ENCODE measurements at regions of chr10 and their contacts with region 1.

Region 1: GRCh38 chr10:4813023-4813422 is 13.0 kb upstream of the AKR1E2 start:
- DNase-seq: peak in 2 of 14 experiments; percentile 27 to 52
- ATAC-seq: no peak
- H3K4me3 ChIP-seq: no peak overlapping the region
- H3K4me3 Mint-ChIP-seq: no peak overlapping the region
- H3K27ac ChIP-seq: no peak overlapping the region
- H3K27ac Mint-ChIP-seq: no peak overlapping the region
- H3K4me1 ChIP-seq: peaks cover 3% of the 10 kb centered on the region
- H3K4me1 Mint-ChIP-seq: no peaks in the 10 kb centered on the region
- H3K27me3 ChIP-seq: peaks cover 0 to 4% of the 10 kb centered on the region in 2 experiments
- H3K27me3 Mint-ChIP-seq: peaks cover 11% of the 10 kb centered on the region
- CTCF ChIP-seq: no peak

Region 2: DNA sequence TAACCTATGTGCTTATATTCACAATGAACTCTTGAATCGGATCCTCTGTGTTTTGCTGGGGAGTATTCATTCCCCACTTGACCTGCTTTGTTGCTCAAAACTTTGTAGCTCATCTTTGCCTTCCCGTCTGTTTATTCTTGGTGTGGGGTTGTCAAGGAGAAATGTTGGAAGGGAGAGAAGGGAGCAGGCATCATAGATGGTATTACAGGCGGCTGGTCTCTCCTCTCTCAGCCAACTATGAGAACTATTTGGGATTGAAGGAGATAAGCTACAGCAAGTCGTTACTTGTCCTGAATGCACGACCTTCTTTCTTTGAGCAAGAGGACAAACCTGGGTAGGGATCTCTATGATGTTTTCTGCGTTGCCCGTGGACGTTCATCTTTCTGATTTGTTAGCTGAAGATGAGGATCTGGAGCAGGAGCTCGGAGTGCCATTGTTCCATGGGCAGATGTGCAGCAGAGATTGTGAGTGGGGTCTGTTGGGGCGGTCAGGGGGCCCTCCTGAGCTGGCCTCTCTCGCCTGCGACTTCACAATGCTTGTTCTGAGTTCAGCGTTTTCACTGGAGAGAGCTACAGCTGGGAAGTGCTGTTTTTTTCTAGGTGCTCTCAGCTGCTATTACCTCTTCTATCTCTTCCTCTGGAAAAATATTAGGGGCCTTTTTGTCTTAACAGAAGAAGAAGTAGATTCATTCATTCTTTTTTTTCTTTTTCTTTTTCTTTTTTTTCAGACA is 901.1 kb before region 1 on chr10:
- CTCF ChIA-PET with region 1: no interaction called
- POLR2A ChIA-PET with region 1: no interaction called
- intact Hi-C with region 1: no loop called
- DNase-seq: no peak
- ATAC-seq: no peak
- H3K4me3 ChIP-seq: no peak overlapping the region
- H3K4me3 Mint-ChIP-seq: no peak overlapping the region
- H3K27ac ChIP-seq: no peak overlapping the region
- H3K27ac Mint-ChIP-seq: no peak overlapping the region
- H3K4me1 ChIP-seq: no peaks in the 10 kb centered on the region
- H3K4me1 Mint-ChIP-seq: no peaks in the 10 kb centered on the region
- H3K27me3 ChIP-seq: no peaks in the 10 kb centered on the region
- H3K27me3 Mint-ChIP-seq: no peaks in the 10 kb centered on the region
- CTCF ChIP-seq: no peak

Region 3: GRCh38 chr10:4748491-4749308 is 64.3 kb before region 1 on chr10:
- CTCF ChIA-PET with region 1: no interaction called
- POLR2A ChIA-PET with region 1: no interaction called
- intact Hi-C with region 1: no loop called
- DNase-seq: no peak
- ATAC-seq: no peak
- H3K4me3 ChIP-seq: no peak overlapping the region
- H3K4me3 Mint-ChIP-seq: no peak overlapping the region
- H3K27ac ChIP-seq: no peak overlapping the region
- H3K27ac Mint-ChIP-seq: no peak overlapping the region
- H3K4me1 ChIP-seq: no peaks in the 10 kb centered on the region
- H3K4me1 Mint-ChIP-seq: no peaks in the 10 kb centered on the region
- H3K27me3 ChIP-seq: peaks cover 18 to 40% of the 10 kb centered on the region in 2 experiments
- H3K27me3 Mint-ChIP-seq: peaks cover 53% of the 10 kb centered on the region
- CTCF ChIP-seq: no peak

Region 4: GRCh38 chr10:4825851-4826665 is 13.0 kb after region 1 on chr10 and contains the start of gene AKR1E2:
- CTCF ChIA-PET with region 1: interaction called, 21 read pairs
- POLR2A ChIA-PET with region 1: interaction called, 6 read pairs
- intact Hi-C with region 1: no loop called
- DNase-seq: peak; percentile 45 to 94 (median 78)
- ATAC-seq: peak; percentile 92
- H3K4me3 ChIP-seq: peak within 1 kb of the TSS; percentile 52
- H3K4me3 Mint-ChIP-seq: peak within 1 kb of the TSS; percentile 66
- H3K27ac ChIP-seq: peak within 1 kb of the TSS in 1 of 2 donors; percentile 52
- H3K27ac Mint-ChIP-seq: peak within 1 kb of the TSS; percentile 63
- H3K4me1 ChIP-seq: peaks cover 18% of the 10 kb centered on the region
- H3K4me1 Mint-ChIP-seq: peaks cover 43% of the 10 kb centered on the region
- H3K27me3 ChIP-seq: peaks cover 0 to 4% of the 10 kb centered on the region in 2 experiments
- H3K27me3 Mint-ChIP-seq: peaks cover 7% of the 10 kb centered on the region
- CTCF ChIP-seq: no peak
- total RNA-seq, gene AKR1E2: 26.0 to 30.4 TPM

Region 5: DNA sequence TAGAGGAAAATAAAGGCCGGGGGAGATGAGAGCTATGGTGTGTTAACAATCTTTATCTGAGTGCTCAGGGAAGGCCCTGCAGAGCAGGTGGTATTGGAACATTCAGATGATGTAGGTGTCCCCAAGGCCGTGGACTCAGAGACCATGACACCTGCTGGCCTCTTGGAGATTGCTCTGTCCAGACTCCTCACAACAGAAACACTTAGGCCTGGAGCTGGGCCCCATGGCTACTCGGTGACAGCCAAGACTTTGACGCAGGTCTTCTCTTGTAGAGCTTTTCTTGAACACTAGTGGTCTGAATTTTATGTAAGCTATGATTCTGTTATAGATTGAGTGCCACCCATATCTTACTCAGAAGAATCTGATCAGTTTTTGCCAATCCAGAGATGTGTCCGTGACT is 26.4 kb after region 1 on chr10:
- CTCF ChIA-PET with region 1: interaction called, 5 read pairs
- POLR2A ChIA-PET with region 1: interaction called, 3 read pairs
- intact Hi-C with region 1: loop called in 1 of 2 experiments (anchors 2 kb)
- DNase-seq: no peak
- ATAC-seq: no peak
- H3K4me3 ChIP-seq: no peak overlapping the region
- H3K4me3 Mint-ChIP-seq: no peak overlapping the region
- H3K27ac ChIP-seq: no peak overlapping the region
- H3K27ac Mint-ChIP-seq: peak overlapping the region; percentile 77
- H3K4me1 ChIP-seq: peaks cover 34% of the 10 kb centered on the region
- H3K4me1 Mint-ChIP-seq: peaks cover 42% of the 10 kb centered on the region
- H3K27me3 ChIP-seq: no peaks in the 10 kb centered on the region
- H3K27me3 Mint-ChIP-seq: no peaks in the 10 kb centered on the region
- CTCF ChIP-seq: no peak

Region 6: DNA sequence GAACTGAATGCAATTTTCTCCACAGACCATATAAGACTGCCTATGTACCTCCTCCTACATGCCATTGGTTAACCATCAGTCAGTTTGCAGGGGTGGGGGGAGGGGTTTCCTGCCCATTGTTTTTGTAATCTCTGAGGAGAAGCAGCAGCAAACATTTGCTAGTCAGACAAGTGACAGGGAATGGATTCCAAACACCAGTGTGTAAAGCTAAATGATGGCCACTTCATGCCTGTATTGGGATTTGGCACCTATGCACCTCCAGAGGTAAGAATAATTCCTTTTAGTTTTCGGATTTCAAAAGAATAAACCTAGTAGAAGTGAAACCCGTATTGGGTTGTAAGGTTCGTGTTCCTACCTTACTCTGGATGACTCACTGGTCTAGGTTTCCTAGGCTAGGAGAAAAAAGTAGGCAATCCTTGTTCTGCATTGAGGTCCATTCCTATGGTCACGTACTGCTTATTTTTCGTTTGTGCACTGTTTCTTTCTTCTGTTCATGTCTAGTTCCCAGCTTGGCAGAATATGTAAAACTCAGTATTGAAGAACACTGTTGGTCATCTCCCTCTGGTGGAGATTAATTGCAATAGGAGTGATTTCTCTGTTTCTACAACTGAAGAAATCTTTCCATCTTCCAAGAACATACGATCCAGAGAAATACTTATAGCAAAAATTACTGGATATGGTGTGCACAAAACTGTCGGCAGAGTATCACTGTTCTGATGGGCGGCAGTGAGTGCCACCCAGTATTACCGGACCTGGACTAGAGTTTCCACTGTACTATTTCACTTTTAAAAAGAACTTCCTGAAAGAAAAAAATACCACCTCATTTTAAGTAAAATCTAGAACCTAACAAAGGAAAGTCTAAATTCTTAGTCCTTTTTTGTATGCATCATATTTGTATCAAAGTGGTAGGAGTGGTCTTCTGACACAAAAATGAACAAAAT is 281.5 kb after region 1 on chr10 and contains the start of gene AKR1C3:
- CTCF ChIA-PET with region 1: interaction called, 4 read pairs
- POLR2A ChIA-PET with region 1: no interaction called
- intact Hi-C with region 1: loop called (anchors 1 to 2 kb)
- DNase-seq: peak in 5 of 14 experiments; percentile 2 to 69 (median 56)
- ATAC-seq: peak; percentile 83
- H3K4me3 ChIP-seq: peak within 1 kb of the TSS; percentile 66
- H3K4me3 Mint-ChIP-seq: peak within 1 kb of the TSS; percentile 86
- H3K27ac ChIP-seq: no peak within 1 kb of the TSS
- H3K27ac Mint-ChIP-seq: peak within 1 kb of the TSS; percentile 57
- H3K4me1 ChIP-seq: no peaks in the 10 kb centered on the region
- H3K4me1 Mint-ChIP-seq: peaks cover 8% of the 10 kb centered on the region
- H3K27me3 ChIP-seq: peaks cover 0 to 4% of the 10 kb centered on the region in 2 experiments
- H3K27me3 Mint-ChIP-seq: peaks cover 8% of the 10 kb centered on the region
- CTCF ChIP-seq: peak; percentile 65
- total RNA-seq, gene AKR1C3: 1.9 to 2.0 TPM

Region 7: GRCh38 chr10:5385224-5385623 is 572.2 kb after region 1 on chr10:
- CTCF ChIA-PET with region 1: no interaction called
- POLR2A ChIA-PET with region 1: no interaction called
- intact Hi-C with region 1: loop called in 1 of 2 experiments (anchors 10 kb)
- DNase-seq: no peak
- ATAC-seq: no peak
- H3K4me3 ChIP-seq: no peak overlapping the region
- H3K4me3 Mint-ChIP-seq: no peak overlapping the region
- H3K27ac ChIP-seq: no peak overlapping the region
- H3K27ac Mint-ChIP-seq: no peak overlapping the region
- H3K4me1 ChIP-seq: peaks cover 4% of the 10 kb centered on the region
- H3K4me1 Mint-ChIP-seq: no peaks in the 10 kb centered on the region
- H3K27me3 ChIP-seq: no peaks in the 10 kb centered on the region
- H3K27me3 Mint-ChIP-seq: peaks cover 9% of the 10 kb centered on the region
- CTCF ChIP-seq: no peak